HepG2 (cell line): ENCODE measurements at regions of chr15 and their contacts with region 1.

Region 1: GRCh38 chr15:101540480-101541239 is 51.2 kb upstream of the PCSK6 start:
- DNase-seq: peak; percentile 65
- ATAC-seq: peak; percentile 84
- H3K4me3 ChIP-seq: peak overlapping the region in 2 of 3 experiments; percentile 15 to 63; a peak in 3 of 6 replicates
- H3K27ac ChIP-seq: no peak overlapping the region
- H3K4me1 ChIP-seq: peaks cover 68% of the 10 kb centered on the region
- H3K27me3 ChIP-seq: no peaks in the 10 kb centered on the region
- CTCF ChIP-seq: peak; percentile 83
- EP300 ChIP-seq: no peak
- POLR2A ChIP-seq: no peak
- RAD21 ChIP-seq: peak; percentile 83

Region 2: DNA sequence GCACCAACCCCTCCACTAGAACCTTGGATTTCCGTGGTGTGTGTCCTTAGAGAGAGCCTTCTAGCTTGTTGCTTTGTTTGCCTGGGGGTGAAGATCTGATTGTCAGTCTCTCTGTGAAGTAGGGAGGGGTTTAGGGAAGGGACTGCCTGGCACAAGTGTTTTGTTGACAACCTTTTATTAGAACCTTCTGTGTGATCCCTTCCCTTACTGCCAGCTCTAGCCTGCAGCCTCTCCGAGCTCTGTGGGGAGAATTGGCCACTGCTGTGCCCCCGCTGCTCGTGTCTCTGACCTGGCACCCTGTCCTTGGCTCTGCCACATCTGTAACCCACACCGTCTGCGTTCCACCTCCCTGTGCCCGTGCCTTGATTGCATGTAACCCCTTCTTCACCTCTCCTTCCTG is 20.3 kb before region 1 on chr15:
- CTCF ChIA-PET with region 1: no interaction called
- POLR2A ChIA-PET with region 1: interaction called, 6 read pairs
- in situ Hi-C with region 1: no loop called
- intact Hi-C with region 1: loop called (anchors 1 kb)
- DNase-seq: no peak
- ATAC-seq: no peak
- H3K4me3 ChIP-seq: no peak overlapping the region
- H3K27ac ChIP-seq: no peak overlapping the region
- H3K4me1 ChIP-seq: peaks cover 45% of the 10 kb centered on the region
- H3K27me3 ChIP-seq: no peaks in the 10 kb centered on the region
- CTCF ChIP-seq: no peak
- EP300 ChIP-seq: no peak
- POLR2A ChIP-seq: no peak
- RAD21 ChIP-seq: no peak

Region 3: GRCh38 chr15:101578437-101578894 is 37.8 kb after region 1 on chr15:
- CTCF ChIA-PET with region 1: interaction called, 7 read pairs
- POLR2A ChIA-PET with region 1: no interaction called
- in situ Hi-C with region 1: loop called (anchors 5 kb)
- intact Hi-C with region 1: no loop called
- DNase-seq: peak; percentile 50
- ATAC-seq: peak; percentile 97
- H3K4me3 ChIP-seq: no peak overlapping the region
- H3K27ac ChIP-seq: no peak overlapping the region
- H3K4me1 ChIP-seq: peaks cover 17% of the 10 kb centered on the region; the same call in 1 of the 2 replicates
- H3K27me3 ChIP-seq: peaks cover 0 to 10% of the 10 kb centered on the region in 2 experiments
- CTCF ChIP-seq: peak; percentile 91
- EP300 ChIP-seq: no peak
- POLR2A ChIP-seq: no peak
- RAD21 ChIP-seq: peak; percentile 87

Region 4: DNA sequence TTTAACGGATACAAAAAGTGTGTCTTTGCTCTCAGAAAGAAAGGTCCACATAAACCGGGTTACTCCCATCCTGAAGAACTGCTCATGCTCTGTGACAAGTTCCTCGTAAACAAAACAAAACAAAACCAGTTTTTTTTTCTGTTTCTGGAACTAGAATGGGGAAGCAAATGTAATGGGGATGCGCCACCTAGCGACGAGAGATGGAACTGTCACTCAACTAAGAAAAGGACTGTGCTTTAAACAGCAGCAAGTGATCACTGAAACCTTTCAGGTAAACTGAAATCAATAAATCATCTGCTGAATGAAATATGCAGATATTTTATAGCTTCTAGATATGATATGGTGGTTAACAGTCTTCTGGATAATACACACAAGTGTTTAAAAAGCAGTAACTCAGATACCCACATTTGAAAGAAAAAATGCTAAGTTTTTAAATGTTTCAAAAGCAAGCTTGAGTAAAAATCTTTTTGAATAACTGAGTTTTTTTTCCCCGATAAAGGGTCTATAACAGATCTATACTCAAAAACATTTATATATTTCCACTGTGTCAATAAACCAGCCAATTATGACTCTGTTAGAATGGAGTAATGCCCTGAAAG is 100.6 kb after region 1 on chr15:
- CTCF ChIA-PET with region 1: interaction called, 11 read pairs
- POLR2A ChIA-PET with region 1: no interaction called
- in situ Hi-C with region 1: loop called (anchors 5 kb)
- intact Hi-C with region 1: loop called (anchors 2 kb)
- DNase-seq: peak; percentile 52
- ATAC-seq: peak; percentile 59
- H3K4me3 ChIP-seq: no peak overlapping the region
- H3K27ac ChIP-seq: no peak overlapping the region
- H3K4me1 ChIP-seq: peaks cover 36% of the 10 kb centered on the region
- H3K27me3 ChIP-seq: no peaks in the 10 kb centered on the region
- CTCF ChIP-seq: peak; percentile 89
- EP300 ChIP-seq: no peak
- POLR2A ChIP-seq: no peak
- RAD21 ChIP-seq: peak; percentile 84